Activated CD8-positive, alpha-beta T cell treated with anti-CD3 and anti-CD28 coated beads for 36 hours (primary cell): ENCODE measurements at regions of chr1 and their contacts with region 1.

Region 1: DNA sequence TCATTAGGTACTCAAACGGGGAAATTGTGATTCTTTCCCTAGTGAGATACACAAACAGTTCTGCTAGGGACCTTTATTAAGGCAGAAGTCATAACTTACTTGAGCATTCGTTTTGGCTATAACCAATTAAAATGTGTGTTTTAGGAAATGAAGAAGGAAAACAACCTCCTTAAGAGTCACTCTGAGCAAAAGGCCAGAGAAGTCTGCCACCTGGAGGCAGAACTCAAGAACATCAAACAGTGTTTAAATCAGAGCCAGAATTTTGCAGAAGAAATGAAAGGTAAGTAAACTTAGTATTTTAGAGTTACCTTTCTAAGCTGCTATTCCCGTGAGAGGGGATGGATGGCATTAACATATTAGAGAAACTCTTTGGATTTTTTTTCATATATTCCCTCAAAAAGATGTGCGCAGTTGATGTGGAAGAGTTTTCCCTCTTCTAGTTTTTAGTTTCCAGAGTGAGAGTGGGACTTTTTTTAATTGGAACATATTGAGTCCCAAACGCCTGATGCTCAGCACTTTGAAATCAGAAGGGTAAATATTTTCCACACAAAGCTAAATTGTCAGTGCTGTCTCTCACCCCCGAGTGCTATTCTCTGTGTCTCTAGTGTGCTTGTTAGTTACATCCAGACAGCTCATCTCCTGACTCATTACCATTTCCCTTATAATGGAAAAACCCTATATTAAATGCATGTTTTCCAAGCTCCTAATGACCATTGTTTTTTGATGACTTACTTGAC is 34.9 kb downstream of the CENPF start:
- DNase-seq: peak; percentile 26
- ATAC-seq: peak; percentile 42
- H3K4me3 Mint-ChIP-seq: no peak overlapping the region
- H3K27ac Mint-ChIP-seq: no peak overlapping the region
- H3K4me1 Mint-ChIP-seq: peaks cover 32% of the 10 kb centered on the region
- H3K27me3 Mint-ChIP-seq: no peaks in the 10 kb centered on the region
- CTCF ChIP-seq: peak; percentile 56

Region 2: GRCh38 chr1:214590696-214591095 is 47.2 kb before region 1 on chr1:
- CTCF ChIA-PET with region 1: no interaction called
- POLR2A ChIA-PET with region 1: no interaction called
- intact Hi-C with region 1: no loop called
- DNase-seq: no peak
- ATAC-seq: no peak
- H3K4me3 Mint-ChIP-seq: no peak overlapping the region
- H3K27ac Mint-ChIP-seq: no peak overlapping the region
- H3K4me1 Mint-ChIP-seq: no peaks in the 10 kb centered on the region
- H3K27me3 Mint-ChIP-seq: peaks cover 3% of the 10 kb centered on the region
- CTCF ChIP-seq: no peak

Region 3: GRCh38 chr1:214623430-214623829 is 14.5 kb before region 1 on chr1:
- CTCF ChIA-PET with region 1: interaction called, 72 read pairs
- POLR2A ChIA-PET with region 1: no interaction called
- intact Hi-C with region 1: no loop called
- DNase-seq: no peak
- ATAC-seq: no peak
- H3K4me3 Mint-ChIP-seq: no peak overlapping the region
- H3K27ac Mint-ChIP-seq: no peak overlapping the region
- H3K4me1 Mint-ChIP-seq: no peaks in the 10 kb centered on the region
- H3K27me3 Mint-ChIP-seq: no peaks in the 10 kb centered on the region
- CTCF ChIP-seq: no peak

Region 4: DNA sequence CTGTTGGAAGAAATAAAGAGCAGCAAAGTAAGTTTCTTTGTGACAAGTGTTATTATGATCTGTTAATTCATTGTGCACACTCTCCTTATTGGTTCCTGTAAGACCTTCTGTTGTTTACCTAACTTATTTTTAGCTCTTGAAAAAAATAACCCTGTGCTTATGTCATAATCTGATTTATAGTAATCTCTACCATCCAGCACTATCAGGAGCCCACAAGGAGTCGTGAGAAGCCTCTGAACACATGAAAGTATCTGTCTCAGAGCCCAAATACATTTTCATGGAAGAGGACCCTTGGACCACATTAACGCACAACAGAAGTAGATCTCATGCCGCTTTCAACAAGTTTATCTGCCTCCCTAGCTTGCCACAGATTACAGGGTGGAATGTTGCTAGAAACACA is 10.9 kb after region 1 on chr1:
- CTCF ChIA-PET with region 1: interaction called, 31 read pairs
- POLR2A ChIA-PET with region 1: no interaction called
- intact Hi-C with region 1: no loop called
- DNase-seq: no peak
- ATAC-seq: no peak
- H3K4me3 Mint-ChIP-seq: no peak overlapping the region
- H3K27ac Mint-ChIP-seq: no peak overlapping the region
- H3K4me1 Mint-ChIP-seq: no peaks in the 10 kb centered on the region
- H3K27me3 Mint-ChIP-seq: no peaks in the 10 kb centered on the region
- CTCF ChIP-seq: no peak

Region 5: GRCh38 chr1:214739621-214740238 is 101.8 kb after region 1 on chr1:
- CTCF ChIA-PET with region 1: no interaction called
- POLR2A ChIA-PET with region 1: no interaction called
- intact Hi-C with region 1: no loop called
- DNase-seq: no peak
- ATAC-seq: no peak
- H3K4me3 Mint-ChIP-seq: no peak overlapping the region
- H3K27ac Mint-ChIP-seq: no peak overlapping the region
- H3K4me1 Mint-ChIP-seq: peaks cover 4% of the 10 kb centered on the region
- H3K27me3 Mint-ChIP-seq: no peaks in the 10 kb centered on the region
- CTCF ChIP-seq: no peak